CD8-positive, alpha-beta T cell (primary cell): ENCODE measurements at regions of chr18 and their contacts with region 1.

Region 1: DNA sequence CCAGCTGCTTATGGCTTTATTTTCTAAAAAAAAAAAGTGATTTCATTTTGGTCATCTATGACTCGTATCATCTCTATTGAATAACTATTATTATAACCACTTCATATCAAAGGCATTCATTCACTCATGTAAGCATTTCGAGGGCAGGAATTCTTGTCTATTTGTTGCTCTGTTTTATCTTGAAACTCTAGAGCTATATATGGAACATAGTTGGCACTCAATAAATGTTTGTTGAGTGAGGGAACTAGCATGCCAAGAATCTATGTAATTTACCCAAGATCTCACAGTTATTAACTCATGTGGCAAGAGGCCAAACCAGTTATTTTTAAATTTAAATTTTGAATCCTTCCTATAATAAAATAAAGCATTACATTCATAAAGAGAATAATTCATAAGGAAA is 470.1 kb downstream of the TMX3 start:
- DNase-seq: no peak
- ATAC-seq: no peak
- H3K4me3 ChIP-seq: no peak overlapping the region
- H3K4me3 Mint-ChIP-seq: no peak overlapping the region
- H3K27ac ChIP-seq: no peak overlapping the region
- H3K27ac Mint-ChIP-seq: no peak overlapping the region
- H3K4me1 ChIP-seq: no peaks in the 10 kb centered on the region
- H3K4me1 Mint-ChIP-seq: no peaks in the 10 kb centered on the region
- H3K27me3 ChIP-seq: no peaks in the 10 kb centered on the region
- H3K27me3 Mint-ChIP-seq: no peaks in the 10 kb centered on the region
- CTCF ChIP-seq: no peak

Region 2: DNA sequence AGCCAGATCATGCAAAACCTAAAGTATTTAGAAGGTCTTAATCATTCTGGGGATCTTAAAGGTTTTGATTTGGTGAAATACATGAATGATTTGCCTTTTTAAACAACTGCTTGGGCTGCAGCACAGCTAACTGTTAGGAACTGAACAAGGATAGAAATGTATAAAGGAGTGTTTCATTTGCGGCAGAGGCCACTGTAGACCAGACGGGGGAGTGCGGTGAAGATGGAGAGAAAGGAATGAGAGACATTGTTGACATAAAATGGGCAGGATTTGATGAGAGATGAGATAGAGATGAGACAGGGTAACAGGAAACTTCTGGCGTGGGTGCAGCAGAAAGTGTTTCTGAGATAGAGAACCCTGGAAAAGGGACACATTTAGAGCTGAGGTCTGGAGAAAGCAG is 162.0 kb after region 1 on chr18:
- CTCF ChIA-PET with region 1: no interaction called
- POLR2A ChIA-PET with region 1: no interaction called
- intact Hi-C with region 1: no loop called
- DNase-seq: no peak
- ATAC-seq: no peak
- H3K4me3 ChIP-seq: no peak overlapping the region
- H3K4me3 Mint-ChIP-seq: no peak overlapping the region
- H3K27ac ChIP-seq: no peak overlapping the region
- H3K27ac Mint-ChIP-seq: no peak overlapping the region
- H3K4me1 ChIP-seq: no peaks in the 10 kb centered on the region
- H3K4me1 Mint-ChIP-seq: no peaks in the 10 kb centered on the region
- H3K27me3 ChIP-seq: no peaks in the 10 kb centered on the region
- H3K27me3 Mint-ChIP-seq: no peaks in the 10 kb centered on the region
- CTCF ChIP-seq: no peak

Region 3: GRCh38 chr18:70176537-70176936 is 1931.8 kb after region 1 on chr18:
- CTCF ChIA-PET with region 1: no interaction called
- POLR2A ChIA-PET with region 1: no interaction called
- intact Hi-C with region 1: loop called in 1 of 2 experiments (anchors 5 kb)
- DNase-seq: no peak
- ATAC-seq: no peak
- H3K4me3 ChIP-seq: no peak overlapping the region
- H3K4me3 Mint-ChIP-seq: no peak overlapping the region
- H3K27ac ChIP-seq: no peak overlapping the region
- H3K27ac Mint-ChIP-seq: no peak overlapping the region
- H3K4me1 ChIP-seq: no peaks in the 10 kb centered on the region
- H3K4me1 Mint-ChIP-seq: peaks cover 2% of the 10 kb centered on the region
- H3K27me3 ChIP-seq: no peaks in the 10 kb centered on the region
- H3K27me3 Mint-ChIP-seq: no peaks in the 10 kb centered on the region
- CTCF ChIP-seq: no peak